ENCODE measurements at regions of chr19 and their contacts with region 1.

Region 1: GRCh38 chr19:46265217-46265828 is 31.5 kb upstream of the HIF3A start:
- DNase-seq: peak; percentile 65
- H3K4me3 Mint-ChIP-seq: no peak overlapping the region
- H3K27ac Mint-ChIP-seq: no peak overlapping the region
- H3K4me1 Mint-ChIP-seq: peaks cover 11% of the 10 kb centered on the region
- H3K27me3 Mint-ChIP-seq: peaks cover 55% of the 10 kb centered on the region

Region 2: GRCh38 chr19:46030812-46031550 is 234.3 kb before region 1 on chr19:
- intact Hi-C with region 1: loop called (anchors 1 kb)
- DNase-seq: no peak
- H3K4me3 Mint-ChIP-seq: no peak overlapping the region
- H3K27ac Mint-ChIP-seq: no peak overlapping the region
- H3K4me1 Mint-ChIP-seq: peaks cover 11% of the 10 kb centered on the region
- H3K27me3 Mint-ChIP-seq: peaks cover 18% of the 10 kb centered on the region

Region 3: GRCh38 chr19:46115396-46116106 is 149.8 kb before region 1 on chr19:
- intact Hi-C with region 1: loop called (anchors 1 kb)
- DNase-seq: peak; percentile 14
- H3K4me3 Mint-ChIP-seq: no peak overlapping the region
- H3K27ac Mint-ChIP-seq: peak overlapping the region; percentile 3
- H3K4me1 Mint-ChIP-seq: peaks cover 24% of the 10 kb centered on the region
- H3K27me3 Mint-ChIP-seq: peaks cover 22% of the 10 kb centered on the region

Region 4: GRCh38 chr19:46189971-46190888 is 75.1 kb before region 1 on chr19:
- intact Hi-C with region 1: loop called (anchors 2 kb)
- DNase-seq: no peak
- H3K4me3 Mint-ChIP-seq: no peak overlapping the region
- H3K27ac Mint-ChIP-seq: no peak overlapping the region
- H3K4me1 Mint-ChIP-seq: peaks cover 19% of the 10 kb centered on the region
- H3K27me3 Mint-ChIP-seq: peaks cover 37% of the 10 kb centered on the region

Region 5: DNA sequence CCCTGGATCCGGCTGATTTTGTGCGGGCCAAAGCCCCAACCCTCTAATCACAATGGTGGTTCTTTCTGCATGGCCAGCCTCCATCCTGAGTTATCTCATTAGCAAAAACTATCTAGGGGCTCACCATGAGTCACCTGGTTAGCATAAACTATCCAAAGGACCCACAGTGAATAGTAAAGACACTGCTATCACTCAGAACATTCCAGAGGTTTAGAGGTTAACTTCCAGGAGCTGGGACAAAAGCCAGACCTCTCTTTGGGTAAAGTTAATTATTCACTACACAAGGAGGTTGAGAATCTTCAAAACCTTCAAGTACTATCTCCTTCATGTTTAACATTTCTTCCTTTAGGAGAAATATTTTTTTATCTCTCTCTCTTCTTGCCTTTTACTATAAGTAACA is 62.8 kb after region 1 on chr19:
- intact Hi-C with region 1: no loop called
- DNase-seq: no peak
- H3K4me3 Mint-ChIP-seq: no peak overlapping the region
- H3K27ac Mint-ChIP-seq: no peak overlapping the region
- H3K4me1 Mint-ChIP-seq: no peaks in the 10 kb centered on the region
- H3K27me3 Mint-ChIP-seq: no peaks in the 10 kb centered on the region

Measured in activated T-helper 2 cell treated with anti-CD3 and anti-CD28 coated beads, Interferon-gamma antibody, Interleukin-2, Interleukin-4, amounts not matched to agents 10 μg/mL and 5 μg/mL and 100 μg/mL, durations not matched to agents 14 hours and 24 hours and 36 hours (primary cell).